CD8-positive, alpha-beta memory T cell (primary cell): ENCODE measurements at regions of chr14 and their contacts with region 1.

Region 1: GRCh38 chr14:73613046-73613383 is 698 bp downstream of the ACOT6 start:
- DNase-seq: no peak
- H3K4me3 ChIP-seq: peak overlapping the region; percentile 75
- H3K4me3 Mint-ChIP-seq: peak overlapping the region; percentile 84 to 95 (median 90)
- H3K27ac ChIP-seq: peak overlapping the region; percentile 45
- H3K27ac Mint-ChIP-seq: peak overlapping the region; percentile 66 to 97 (median 81)
- H3K4me1 ChIP-seq: peaks cover 8% of the 10 kb centered on the region
- H3K4me1 Mint-ChIP-seq: peaks cover 0 to 3% (median 0%) of the 10 kb centered on the region in 3 donors
- H3K27me3 ChIP-seq: no peaks in the 10 kb centered on the region
- H3K27me3 Mint-ChIP-seq: peaks cover 2 to 7% of the 10 kb centered on the region in 2 donors

Region 2: DNA sequence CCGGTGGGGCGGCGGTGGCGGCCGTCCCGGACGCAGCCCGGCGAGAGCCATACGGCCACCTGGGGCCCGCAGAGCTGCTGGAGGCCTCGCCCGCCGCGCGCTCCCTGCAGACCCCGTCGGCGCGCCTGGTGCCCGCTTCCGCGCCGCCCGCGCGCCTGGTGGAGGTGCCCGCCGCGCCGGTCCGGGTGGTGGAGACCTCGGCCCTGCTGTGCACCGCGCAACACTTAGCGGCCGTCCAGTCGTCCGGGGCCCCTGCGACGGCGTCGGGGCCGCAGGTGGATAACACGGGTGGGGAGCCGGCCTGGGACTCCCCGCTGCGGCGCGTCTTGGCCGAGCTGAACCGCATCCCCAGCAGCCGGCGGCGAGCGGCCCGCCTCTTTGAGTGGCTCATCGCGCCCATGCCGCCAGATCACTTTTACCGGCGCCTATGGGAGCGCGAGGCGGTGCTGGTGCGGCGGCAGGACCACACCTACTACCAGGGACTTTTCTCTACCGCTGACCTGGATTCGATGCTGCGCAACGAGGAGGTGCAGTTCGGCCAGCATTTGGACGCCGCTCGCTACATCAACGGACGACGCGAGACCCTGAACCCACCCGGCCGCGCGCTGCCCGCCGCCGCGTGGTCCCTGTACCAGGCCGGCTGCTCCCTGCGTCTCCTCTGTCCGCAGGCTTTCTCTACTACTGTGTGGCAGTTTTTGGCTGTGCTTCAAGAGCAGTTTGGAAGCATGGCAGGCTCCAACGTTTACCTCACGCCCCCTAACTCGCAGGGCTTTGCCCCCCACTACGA is 121.6 kb before region 1 on chr14:
- CTCF ChIA-PET with region 1: no interaction called
- POLR2A ChIA-PET with region 1: interaction called, 15 read pairs
- DNase-seq: peak; percentile 57 to 80 (median 67)
- H3K4me3 ChIP-seq: peak overlapping the region; percentile 85
- H3K4me3 Mint-ChIP-seq: peak overlapping the region; percentile 86 to 98 (median 87)
- H3K27ac ChIP-seq: peak overlapping the region; percentile 88
- H3K27ac Mint-ChIP-seq: peak overlapping the region in 7 of 8 donors; percentile 80 to 92 (median 88)
- H3K4me1 ChIP-seq: peaks cover 31% of the 10 kb centered on the region
- H3K4me1 Mint-ChIP-seq: peaks cover 43 to 61% (median 61%) of the 10 kb centered on the region in 3 donors
- H3K27me3 ChIP-seq: no peaks in the 10 kb centered on the region
- H3K27me3 Mint-ChIP-seq: no peaks in the 10 kb centered on the region

Region 3: GRCh38 chr14:73591690-73592448 is 21.1 kb before region 1 on chr14 and contains the start of gene ACOT4:
- CTCF ChIA-PET with region 1: interaction called, 7 read pairs
- POLR2A ChIA-PET with region 1: interaction called, 23 read pairs
- DNase-seq: peak; percentile 23 to 74 (median 68)
- H3K4me3 ChIP-seq: peak within 1 kb of the TSS; percentile 84
- H3K4me3 Mint-ChIP-seq: peak within 1 kb of the TSS; percentile 73 to 93 (median 80)
- H3K27ac ChIP-seq: peak within 1 kb of the TSS; percentile 75
- H3K27ac Mint-ChIP-seq: peak within 1 kb of the TSS; percentile 37 to 84 (median 80)
- H3K4me1 ChIP-seq: peaks cover 4% of the 10 kb centered on the region
- H3K4me1 Mint-ChIP-seq: peaks cover 9 to 21% (median 16%) of the 10 kb centered on the region in 3 donors
- H3K27me3 ChIP-seq: no peaks in the 10 kb centered on the region
- H3K27me3 Mint-ChIP-seq: peaks cover 0 to 1% of the 10 kb centered on the region in 2 donors
- total RNA-seq, gene ACOT4: 4.0 to 5.0 TPM